A549 (cell line): ENCODE measurements at regions of chr15 and their contacts with region 1.

Region 1: GRCh38 chr15:100341662-100342560 is at the start of gene ADAMTS17:
- DNase-seq: peak; percentile 94
- ATAC-seq: peak; percentile 91 to 99
- H3K4me3 ChIP-seq: peak within 1 kb of the TSS; percentile 54
- H3K27ac ChIP-seq: peak within 1 kb of the TSS; percentile 3 to 35; a peak in 4 of 6 replicates
- H3K4me1 ChIP-seq: peaks cover 4% of the 10 kb centered on the region; the same call in 1 of the 3 replicates
- CTCF ChIP-seq: peak; percentile 87
- EP300 ChIP-seq: no peak
- POLR2A ChIP-seq: no peak
- RAD21 ChIP-seq: peak; percentile 68 to 83
- polyA plus RNA-seq, gene ADAMTS17: 0.05 and 0.11 TPM in 2 replicates

Region 2: DNA sequence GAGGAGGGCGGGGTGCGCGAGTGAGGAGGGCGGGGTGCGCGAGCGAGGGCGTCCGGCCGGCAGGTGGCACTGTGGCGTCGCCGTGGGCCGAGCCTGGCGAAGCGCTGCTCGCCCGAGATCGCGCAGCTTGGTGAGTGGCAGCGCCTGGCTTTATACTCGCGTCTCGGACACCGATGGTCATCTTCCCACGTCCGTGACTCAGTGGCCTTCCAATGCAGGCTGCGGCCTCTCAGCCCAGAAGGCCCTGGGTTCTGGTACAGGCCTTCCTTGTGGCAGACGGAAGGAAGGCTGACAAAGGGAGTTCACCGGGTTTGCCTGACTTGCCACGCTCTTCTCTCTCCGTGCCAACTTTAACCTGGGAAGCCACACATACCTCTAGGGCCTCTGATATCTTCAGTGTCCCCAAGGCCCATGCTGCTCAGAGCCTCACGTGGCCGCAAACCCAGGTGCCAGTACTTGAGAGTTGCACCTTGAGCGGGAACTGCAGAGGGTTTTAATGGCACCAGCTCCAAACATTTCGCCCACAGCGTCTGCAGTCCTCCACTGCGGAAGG is 413.4 kb before region 1 on chr15:
- CTCF ChIA-PET with region 1: interaction called, 11 read pairs
- POLR2A ChIA-PET with region 1: no interaction called
- DNase-seq: peak; percentile 69 to 79
- ATAC-seq: peak; percentile 91 to 96
- H3K4me3 ChIP-seq: peak overlapping the region; percentile 45
- H3K27ac ChIP-seq: peak overlapping the region; percentile 47 to 82; a peak in 5 of 6 replicates
- H3K4me1 ChIP-seq: peaks cover 6% of the 10 kb centered on the region; the same call in 2 of the 3 replicates
- CTCF ChIP-seq: peak; percentile 64
- EP300 ChIP-seq: no peak
- POLR2A ChIP-seq: no peak; the same call in 1 of the 2 replicates
- RAD21 ChIP-seq: peak; percentile 59 to 74

Region 3: DNA sequence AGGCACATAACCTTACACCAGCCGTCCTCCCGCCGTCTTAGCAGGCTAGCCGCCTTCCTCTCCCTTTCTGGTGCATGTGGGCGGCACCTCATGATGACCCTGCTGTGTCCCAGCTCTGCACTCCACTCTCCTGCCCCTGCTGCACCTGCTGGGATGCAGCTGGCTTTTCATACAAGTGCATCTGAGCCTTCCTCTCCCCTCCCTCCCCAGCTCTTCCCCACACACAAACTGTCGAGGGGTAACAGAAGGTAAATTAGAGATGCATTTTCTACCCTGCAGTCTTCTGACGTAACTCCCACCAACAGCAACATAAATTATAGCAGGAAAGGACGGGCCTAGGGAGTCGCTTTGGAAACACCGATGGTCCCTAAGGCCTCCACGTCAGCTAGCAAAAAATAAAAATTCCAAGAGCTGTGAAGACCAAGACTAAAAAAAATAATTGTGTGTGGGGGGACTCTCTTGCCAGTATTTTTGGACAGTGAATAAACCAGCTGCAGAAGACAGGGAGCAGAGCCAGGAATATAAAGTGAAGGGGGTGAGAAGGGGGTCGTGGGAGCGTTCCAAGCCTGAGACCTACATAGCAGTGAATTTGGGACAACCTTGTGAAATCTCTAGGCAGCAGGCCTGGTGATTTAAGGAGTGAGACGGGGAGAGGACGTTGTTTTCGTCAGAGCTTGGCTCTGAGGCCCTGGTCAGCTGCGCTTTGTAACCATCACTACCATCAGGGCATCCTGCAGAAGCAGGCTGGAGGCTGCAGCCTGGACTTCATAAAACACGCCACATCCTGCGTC is 216.3 kb before region 1 on chr15:
- CTCF ChIA-PET with region 1: no interaction called
- POLR2A ChIA-PET with region 1: no interaction called
- DNase-seq: no peak
- ATAC-seq: no peak
- H3K4me3 ChIP-seq: no peak overlapping the region
- H3K27ac ChIP-seq: no peak overlapping the region
- H3K4me1 ChIP-seq: no peaks in the 10 kb centered on the region
- CTCF ChIP-seq: no peak
- EP300 ChIP-seq: no peak
- POLR2A ChIP-seq: no peak
- RAD21 ChIP-seq: no peak

Region 4: DNA sequence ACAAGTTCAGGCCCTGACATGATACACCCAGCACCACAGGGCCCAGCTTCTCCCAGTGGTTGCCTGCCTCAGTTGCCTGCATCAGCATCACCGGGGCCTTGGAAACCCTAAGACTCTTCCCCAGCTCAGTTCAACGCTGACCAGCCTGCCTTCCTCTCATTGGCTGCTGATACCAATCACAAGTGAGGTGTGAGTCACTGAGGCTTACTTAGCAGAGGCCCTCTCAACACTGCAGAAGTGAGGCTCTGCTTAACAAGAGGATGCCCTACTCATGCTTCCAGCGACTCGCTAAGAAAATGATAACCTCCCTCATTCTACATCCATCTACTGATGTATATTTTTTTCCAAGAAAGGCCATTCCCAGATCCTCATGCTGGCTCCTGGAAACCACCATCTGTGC is 152.1 kb before region 1 on chr15:
- CTCF ChIA-PET with region 1: no interaction called
- POLR2A ChIA-PET with region 1: no interaction called
- DNase-seq: no peak
- ATAC-seq: no peak
- H3K4me3 ChIP-seq: no peak overlapping the region
- H3K27ac ChIP-seq: no peak overlapping the region
- H3K4me1 ChIP-seq: no peaks in the 10 kb centered on the region
- CTCF ChIP-seq: no peak
- EP300 ChIP-seq: no peak
- POLR2A ChIP-seq: no peak
- RAD21 ChIP-seq: no peak

Region 5: GRCh38 chr15:100318884-100319283 is 23.0 kb before region 1 on chr15:
- CTCF ChIA-PET with region 1: no interaction called
- POLR2A ChIA-PET with region 1: no interaction called
- DNase-seq: no peak
- ATAC-seq: no peak
- H3K4me3 ChIP-seq: no peak overlapping the region
- H3K27ac ChIP-seq: no peak overlapping the region
- H3K4me1 ChIP-seq: no peaks in the 10 kb centered on the region
- CTCF ChIP-seq: no peak
- EP300 ChIP-seq: no peak
- POLR2A ChIP-seq: no peak
- RAD21 ChIP-seq: no peak

Region 6: DNA sequence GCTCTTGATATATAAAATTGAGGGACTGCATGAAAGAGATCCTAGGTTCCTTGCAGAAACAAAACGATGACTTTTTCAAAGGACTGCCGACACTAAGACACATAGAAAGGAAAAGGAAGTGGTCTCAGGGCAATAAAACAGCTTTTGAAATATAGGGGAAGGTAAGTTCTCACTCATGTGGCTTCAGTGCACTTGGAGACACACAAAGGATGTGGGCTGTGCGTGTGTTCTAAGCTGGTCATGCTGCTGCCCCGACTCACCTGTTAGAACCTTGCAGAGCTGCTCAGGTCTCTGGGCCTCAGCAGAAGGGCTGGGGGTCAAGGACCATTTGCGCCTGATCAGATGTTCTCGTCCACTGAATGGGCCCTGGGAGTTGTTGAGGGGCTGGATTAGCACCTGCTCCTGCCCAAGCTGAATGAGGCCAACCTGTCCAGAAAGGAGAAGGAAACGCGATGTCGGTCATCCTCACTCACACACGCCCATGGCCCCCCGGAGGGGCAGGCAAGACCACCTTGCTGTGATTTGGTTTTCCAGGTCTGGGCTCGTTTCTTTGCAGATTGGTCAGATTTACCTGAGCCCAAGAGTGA is 11.2 kb before region 1 on chr15:
- CTCF ChIA-PET with region 1: interaction called, 167 read pairs
- POLR2A ChIA-PET with region 1: no interaction called
- DNase-seq: no peak
- ATAC-seq: no peak
- H3K4me3 ChIP-seq: no peak overlapping the region
- H3K27ac ChIP-seq: no peak overlapping the region
- H3K4me1 ChIP-seq: no peaks in the 10 kb centered on the region
- CTCF ChIP-seq: no peak
- EP300 ChIP-seq: no peak
- POLR2A ChIP-seq: no peak
- RAD21 ChIP-seq: no peak

Region 7: DNA sequence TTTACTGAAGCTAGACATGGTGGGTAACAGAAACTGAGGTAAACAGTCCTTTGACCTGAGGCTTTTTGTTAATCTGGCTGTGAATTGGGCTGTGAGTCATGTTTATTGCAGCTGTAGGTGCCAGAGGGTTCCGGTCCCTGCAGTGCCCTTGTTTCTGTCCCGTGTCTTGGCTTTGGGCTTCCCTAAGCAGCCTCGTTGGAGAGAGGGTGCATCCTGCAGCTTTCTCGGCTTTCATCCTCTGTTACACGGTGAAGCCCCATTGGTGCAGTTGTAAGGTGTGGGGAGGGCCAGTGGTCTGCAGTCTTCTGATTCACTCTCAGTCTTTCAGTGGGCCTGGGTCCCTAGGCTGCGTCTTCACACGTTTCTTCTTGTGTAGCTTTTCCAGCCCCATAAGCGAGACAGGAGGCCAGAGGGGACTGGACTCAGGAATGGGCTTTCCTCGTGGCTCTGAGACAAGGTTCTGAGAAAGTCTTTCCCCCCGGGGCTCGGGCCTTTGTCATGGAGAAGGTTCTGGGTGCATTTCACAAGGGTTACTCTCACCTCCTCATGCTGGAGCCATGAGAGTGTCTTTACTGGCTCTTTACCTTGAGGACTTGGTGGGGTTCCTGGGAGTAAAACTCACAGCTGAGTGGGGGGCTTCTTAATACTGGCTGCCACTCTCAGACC is 293.6 kb after region 1 on chr15:
- CTCF ChIA-PET with region 1: no interaction called
- POLR2A ChIA-PET with region 1: no interaction called
- DNase-seq: no peak
- ATAC-seq: no peak; a peak in 1 of 6 replicates
- H3K4me3 ChIP-seq: no peak overlapping the region
- H3K27ac ChIP-seq: no peak overlapping the region
- H3K4me1 ChIP-seq: no peaks in the 10 kb centered on the region
- CTCF ChIP-seq: no peak
- EP300 ChIP-seq: no peak
- POLR2A ChIP-seq: no peak
- RAD21 ChIP-seq: no peak